T-cell (primary cell): ENCODE measurements at regions of chr13 and their contacts with region 1.

Region 1: GRCh38 chr13:30132623-30133553 is 174.5 kb downstream of the KATNAL1 start:
- DNase-seq: peak; percentile 88 to 99 (median 96)
- ATAC-seq: peak; percentile 99
- H3K4me3 ChIP-seq: no peak overlapping the region
- H3K4me3 Mint-ChIP-seq: peak overlapping the region; percentile 32 to 60 (median 47)
- H3K27ac ChIP-seq: no peak overlapping the region
- H3K27ac Mint-ChIP-seq: peak overlapping the region; percentile 70 to 79
- H3K4me1 ChIP-seq: peaks cover 2 to 20% of the 10 kb centered on the region in 2 experiments
- H3K4me1 Mint-ChIP-seq: peaks cover 14 to 27% (median 17%) of the 10 kb centered on the region in 3 donors
- H3K27me3 ChIP-seq: no peaks in the 10 kb centered on the region
- H3K27me3 Mint-ChIP-seq: no peaks in the 10 kb centered on the region

Region 2: DNA sequence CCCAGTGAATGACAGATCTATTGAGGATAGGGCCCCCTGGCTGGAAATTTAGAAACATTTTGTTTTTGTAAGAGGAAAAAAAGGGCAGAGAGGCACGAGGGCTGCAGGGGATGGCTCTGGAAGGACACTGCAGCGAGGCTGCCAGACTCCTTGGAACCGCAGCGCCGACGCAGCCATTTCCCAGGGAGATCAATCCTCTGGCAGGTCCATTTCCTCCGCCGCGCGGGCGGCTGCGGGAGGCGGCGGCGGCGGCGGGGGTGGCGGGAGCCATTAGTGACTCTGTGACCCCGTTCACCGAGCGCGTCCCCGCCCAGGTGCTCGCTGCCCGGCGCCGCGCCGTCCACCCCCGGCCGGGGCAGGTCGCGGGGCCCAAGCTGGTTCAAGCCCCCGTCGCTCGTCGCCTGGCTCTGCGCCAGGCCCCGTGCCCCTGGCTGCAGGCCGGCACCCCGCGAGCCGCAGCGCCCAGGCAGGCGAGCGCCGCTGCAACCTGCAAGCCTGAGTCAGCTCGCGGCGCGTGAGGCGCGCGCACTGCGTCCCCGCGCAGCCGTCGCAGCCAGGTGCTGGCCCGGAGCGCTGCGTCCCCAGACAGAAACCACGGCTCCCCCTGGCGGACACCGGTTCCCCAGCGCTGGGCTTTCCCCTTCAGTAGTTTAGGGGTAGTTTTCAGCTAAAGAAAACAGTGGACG is 18.2 kb before region 1 on chr13:
- CTCF ChIA-PET with region 1: interaction called, 7 to 37 read pairs
- POLR2A ChIA-PET with region 1: no interaction called
- DNase-seq: peak; percentile 78 to 96 (median 91)
- ATAC-seq: peak; percentile 89 to 95 (median 94)
- H3K4me3 ChIP-seq: peak overlapping the region; percentile 38 to 47
- H3K4me3 Mint-ChIP-seq: peak overlapping the region; percentile 79 to 80 (median 79)
- H3K27ac ChIP-seq: peak overlapping the region; percentile 37
- H3K27ac Mint-ChIP-seq: peak overlapping the region; percentile 49 to 82
- H3K4me1 ChIP-seq: peaks cover 10 to 26% of the 10 kb centered on the region in 2 experiments
- H3K4me1 Mint-ChIP-seq: peaks cover 30 to 38% (median 38%) of the 10 kb centered on the region in 3 donors
- H3K27me3 ChIP-seq: peaks cover 0 to 2% of the 10 kb centered on the region in 2 experiments
- H3K27me3 Mint-ChIP-seq: no peaks in the 10 kb centered on the region

Region 3: GRCh38 chr13:30145709-30146367 is 12.9 kb after region 1 on chr13:
- CTCF ChIA-PET with region 1: interaction called, 6 to 20 read pairs
- POLR2A ChIA-PET with region 1: interaction called in 1 of 2 experiments, 3 read pairs
- DNase-seq: no peak
- ATAC-seq: no peak
- H3K4me3 ChIP-seq: no peak overlapping the region
- H3K4me3 Mint-ChIP-seq: peak overlapping the region in 2 of 3 donors; percentile 19 to 67
- H3K27ac ChIP-seq: peak overlapping the region; percentile 89
- H3K27ac Mint-ChIP-seq: peak overlapping the region; percentile 96 to 97
- H3K4me1 ChIP-seq: peaks cover 44 to 91% of the 10 kb centered on the region in 2 experiments
- H3K4me1 Mint-ChIP-seq: peaks cover 89 to 96% (median 90%) of the 10 kb centered on the region in 3 donors
- H3K27me3 ChIP-seq: no peaks in the 10 kb centered on the region
- H3K27me3 Mint-ChIP-seq: no peaks in the 10 kb centered on the region

Region 4: GRCh38 chr13:30165796-30166195 is 32.9 kb after region 1 on chr13:
- CTCF ChIA-PET with region 1: interaction called, 5 to 64 read pairs
- POLR2A ChIA-PET with region 1: no interaction called
- DNase-seq: no peak
- ATAC-seq: no peak
- H3K4me3 ChIP-seq: no peak overlapping the region
- H3K4me3 Mint-ChIP-seq: no peak overlapping the region
- H3K27ac ChIP-seq: no peak overlapping the region
- H3K27ac Mint-ChIP-seq: no peak overlapping the region
- H3K4me1 ChIP-seq: peaks cover 1 to 9% of the 10 kb centered on the region in 2 experiments
- H3K4me1 Mint-ChIP-seq: peaks cover 14 to 29% (median 15%) of the 10 kb centered on the region in 3 donors
- H3K27me3 ChIP-seq: no peaks in the 10 kb centered on the region
- H3K27me3 Mint-ChIP-seq: no peaks in the 10 kb centered on the region

Region 5: DNA sequence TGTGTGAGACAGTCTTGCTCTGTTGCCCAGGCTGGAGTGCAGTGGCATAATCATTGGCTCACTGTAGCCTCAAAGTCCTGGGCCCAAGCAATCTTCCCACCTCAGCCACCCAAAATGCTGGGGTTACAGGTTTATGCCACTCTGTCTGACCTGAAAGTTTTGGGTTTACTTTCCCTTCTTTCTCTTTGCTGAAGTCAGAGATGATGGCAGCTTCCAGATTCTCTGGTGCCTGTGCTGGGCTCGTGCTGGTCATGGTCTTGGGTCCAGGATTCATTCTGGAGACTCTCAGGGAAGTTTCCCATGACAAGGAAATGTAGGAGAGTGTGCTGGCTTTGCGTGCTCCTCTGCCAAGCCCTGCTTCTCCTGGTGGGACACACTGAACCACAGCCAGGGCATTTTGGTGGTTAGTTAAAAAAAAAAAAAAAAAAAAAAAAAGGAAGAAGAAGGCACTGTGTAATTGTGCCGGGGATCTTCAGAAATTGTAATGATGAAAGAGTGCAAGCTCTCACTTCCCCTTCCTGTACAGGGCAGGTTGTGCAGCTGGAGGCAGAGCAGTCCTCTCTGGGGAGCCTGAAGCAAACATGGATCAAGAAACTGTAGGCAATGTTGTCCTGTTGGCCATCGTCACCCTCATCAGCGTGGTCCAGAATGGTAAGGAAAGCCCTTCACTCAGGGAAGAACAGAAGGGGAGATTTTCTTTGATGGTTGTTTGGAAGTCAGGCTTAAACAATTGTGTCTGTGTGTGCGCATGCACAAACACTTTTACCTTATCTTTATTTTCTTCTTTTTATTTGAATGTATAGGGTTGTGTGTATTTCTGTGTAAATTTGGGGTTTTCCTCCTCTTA is 602.4 kb after region 1 on chr13 and contains the start of gene ALOX5AP:
- CTCF ChIA-PET with region 1: interaction called, 6 to 10 read pairs
- POLR2A ChIA-PET with region 1: no interaction called
- DNase-seq: peak in 32 of 35 experiments; percentile 18 to 64 (median 31)
- ATAC-seq: peak; percentile 49 to 73 (median 64)
- H3K4me3 ChIP-seq: peak within 1 kb of the TSS; percentile 43 to 67
- H3K4me3 Mint-ChIP-seq: peak within 1 kb of the TSS; percentile 78 to 96 (median 94)
- H3K27ac ChIP-seq: peak within 1 kb of the TSS; percentile 72
- H3K27ac Mint-ChIP-seq: peak within 1 kb of the TSS; percentile 98 to 99
- H3K4me1 ChIP-seq: peaks cover 25 to 46% of the 10 kb centered on the region in 2 experiments
- H3K4me1 Mint-ChIP-seq: peaks cover 65 to 69% (median 68%) of the 10 kb centered on the region in 3 donors
- H3K27me3 ChIP-seq: peaks cover 0 to 11% of the 10 kb centered on the region in 2 experiments
- H3K27me3 Mint-ChIP-seq: no peaks in the 10 kb centered on the region
- total RNA-seq, gene ALOX5AP: 24.2 to 64.9 (median 50.8) TPM